Adrenal gland (tissue), 19 donors: ENCODE measurements at regions of chr9 and their contacts with region 1.

Region 1: GRCh38 chr9:82606492-82607382 is 456.2 kb downstream of the RASEF start:
- DNase-seq: peak; percentile 16 to 77 (median 47)
- H3K4me3 ChIP-seq: no peak overlapping the region
- H3K27ac ChIP-seq: no peak overlapping the region
- H3K4me1 ChIP-seq: no peaks in the 10 kb centered on the region
- H3K27me3 ChIP-seq: no peaks in the 10 kb centered on the region
- CTCF ChIP-seq: peak; percentile 34 to 77 (median 62)
- POLR2A ChIP-seq: no peak

Region 2: DNA sequence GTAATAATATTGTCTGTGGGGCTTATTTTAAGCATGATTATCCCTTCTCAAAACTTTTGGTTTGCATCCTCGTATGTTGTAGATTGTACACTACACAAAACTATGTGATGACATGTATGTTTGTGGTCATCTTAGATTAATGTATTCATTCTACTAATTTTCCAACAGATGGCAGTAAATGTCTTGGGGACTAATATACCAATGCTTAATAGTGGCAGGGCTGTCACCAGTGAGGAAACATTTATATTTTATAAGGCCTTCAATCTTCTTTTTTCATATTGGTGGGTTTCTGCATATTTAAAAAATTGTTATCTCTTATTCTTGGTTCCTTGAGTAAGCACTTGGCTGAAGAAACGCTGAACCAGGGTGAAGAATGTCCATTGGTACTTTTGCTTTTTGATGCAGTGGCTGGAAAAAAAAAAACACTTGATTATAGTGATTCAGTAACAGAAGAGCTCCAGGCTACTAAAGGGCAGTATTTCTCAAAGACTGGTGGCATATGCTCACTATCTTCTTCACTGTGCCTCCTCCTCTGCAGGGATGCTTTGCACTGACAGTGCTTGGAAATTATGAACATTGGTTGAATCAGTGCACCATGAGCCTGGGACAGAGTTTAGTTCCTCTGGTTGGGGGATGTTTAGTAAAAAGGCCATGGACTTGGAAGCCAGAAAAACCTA is 74.1 kb before region 1 on chr9:
- intact Hi-C with region 1: loop called in 1 of 2 experiments (anchors 10 kb)
- DNase-seq: no peak
- H3K4me3 ChIP-seq: no peak overlapping the region
- H3K27ac ChIP-seq: no peak overlapping the region
- H3K4me1 ChIP-seq: no peaks in the 10 kb centered on the region
- H3K27me3 ChIP-seq: no peaks in the 10 kb centered on the region
- CTCF ChIP-seq: peak; percentile 5 to 55 (median 38)
- POLR2A ChIP-seq: no peak

Region 3: GRCh38 chr9:82745919-82746318 is 139.2 kb after region 1 on chr9:
- intact Hi-C with region 1: no loop called
- DNase-seq: no peak
- H3K4me3 ChIP-seq: no peak overlapping the region
- H3K27ac ChIP-seq: no peak overlapping the region
- H3K4me1 ChIP-seq: no peaks in the 10 kb centered on the region
- H3K27me3 ChIP-seq: no peaks in the 10 kb centered on the region
- CTCF ChIP-seq: no peak
- POLR2A ChIP-seq: no peak